Left cardiac atrium (tissue), 4 donors: ENCODE measurements at regions of chr3 and their contacts with region 1.

Region 1: DNA sequence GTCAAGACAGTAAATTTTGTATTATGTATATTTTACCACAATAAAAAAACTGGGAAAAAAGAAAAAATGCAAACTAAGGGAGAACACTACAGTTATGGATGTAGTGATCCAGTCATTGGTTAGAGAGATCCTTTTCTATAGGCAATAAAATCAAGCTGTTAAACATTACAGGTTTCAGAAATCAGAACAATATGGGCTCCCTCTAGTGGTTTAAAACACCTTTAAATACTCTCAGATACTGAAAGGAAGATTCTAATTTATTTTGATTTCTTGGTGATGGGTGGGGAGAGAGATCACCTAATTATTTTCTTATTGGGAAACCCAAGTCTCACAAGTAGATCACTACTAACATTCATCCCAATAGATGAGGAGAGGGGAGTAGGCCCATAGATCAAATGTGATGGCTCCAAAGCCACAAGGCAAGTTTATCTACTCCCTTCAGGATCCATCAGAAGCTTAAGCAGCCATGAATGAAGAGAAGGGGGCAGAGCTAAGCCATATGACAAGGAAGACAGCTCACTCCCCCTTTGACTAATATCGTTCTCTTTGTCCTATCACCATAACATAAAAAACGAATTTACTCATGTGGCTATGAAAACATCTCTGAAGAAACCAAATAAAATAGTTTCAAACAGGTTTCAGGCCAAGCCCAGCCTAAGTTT is 118.6 kb downstream of the ANO10 start:
- DNase-seq: no peak
- ATAC-seq: peak in 1 of 2 donors; percentile 27

Region 2: DNA sequence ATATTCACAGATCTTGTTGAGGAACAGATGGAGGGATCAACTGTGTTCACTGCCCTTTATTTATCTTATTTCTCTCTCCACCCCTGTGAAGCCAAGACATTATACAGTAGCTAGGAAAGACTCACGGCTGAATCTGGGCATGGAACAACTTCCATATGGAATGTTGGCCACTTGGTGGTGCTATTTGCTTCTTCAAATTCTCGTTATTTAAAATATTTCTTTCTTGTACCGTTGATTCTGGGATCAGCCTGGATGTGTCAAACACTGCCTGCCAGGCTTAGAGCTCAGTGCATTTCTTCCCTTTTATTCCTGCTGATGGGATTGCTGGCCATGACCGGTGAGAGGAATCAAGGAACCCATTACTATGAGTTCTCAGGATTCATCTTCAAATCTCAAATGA is 541.6 kb before region 1 on chr3:
- intact Hi-C with region 1: loop called in 1 of 2 experiments (anchors 5 kb)
- DNase-seq: peak; percentile 28
- ATAC-seq: peak; percentile 57 to 74

Region 3: DNA sequence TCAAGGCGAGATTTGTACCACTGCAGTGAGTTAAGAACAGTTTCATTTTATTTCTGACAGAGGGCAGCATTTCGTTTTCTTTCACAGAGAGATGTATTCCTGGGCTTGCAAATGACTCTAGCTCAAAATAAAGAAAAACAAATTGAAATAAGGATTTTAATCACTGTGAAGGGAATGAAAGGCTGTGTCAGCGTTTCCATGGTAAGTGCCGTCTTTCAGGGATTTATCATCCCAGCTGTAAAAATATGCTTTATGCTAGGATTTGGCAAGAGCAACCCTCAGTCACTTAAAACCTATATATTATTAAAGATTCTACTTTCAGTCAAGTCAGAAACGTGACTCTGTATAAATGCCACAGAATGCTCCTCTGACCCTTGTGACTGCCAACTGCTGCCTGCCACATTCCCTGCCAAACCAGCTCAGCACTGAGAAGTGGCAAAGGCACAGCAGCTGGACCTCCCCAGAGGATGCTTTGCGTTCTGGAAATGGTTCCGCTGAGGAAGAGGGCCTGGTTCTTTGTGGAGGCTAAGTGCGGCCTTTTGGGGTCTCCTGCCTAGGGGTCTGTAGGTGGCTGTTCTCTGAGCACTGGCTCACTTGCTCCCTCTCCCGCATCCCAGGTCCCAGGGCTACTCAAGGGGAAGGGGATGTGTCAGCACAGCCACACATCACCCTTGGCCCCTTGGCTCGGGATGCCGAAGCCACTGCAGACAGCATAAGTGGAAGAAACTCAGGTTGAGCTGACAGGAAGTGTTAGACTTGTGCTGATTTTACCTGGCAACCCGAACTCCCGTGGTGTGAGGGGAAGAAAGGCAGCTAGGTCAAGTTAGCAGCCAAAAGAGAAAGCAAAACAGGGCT is 340.7 kb before region 1 on chr3:
- intact Hi-C with region 1: loop called (anchors 1 to 5 kb)
- DNase-seq: no peak
- ATAC-seq: peak; percentile 76 to 79

Region 4: GRCh38 chr3:43223670-43224364 is 279.4 kb before region 1 on chr3:
- intact Hi-C with region 1: loop called in 1 of 2 experiments (anchors 5 kb)
- DNase-seq: no peak
- ATAC-seq: no peak

Region 5: DNA sequence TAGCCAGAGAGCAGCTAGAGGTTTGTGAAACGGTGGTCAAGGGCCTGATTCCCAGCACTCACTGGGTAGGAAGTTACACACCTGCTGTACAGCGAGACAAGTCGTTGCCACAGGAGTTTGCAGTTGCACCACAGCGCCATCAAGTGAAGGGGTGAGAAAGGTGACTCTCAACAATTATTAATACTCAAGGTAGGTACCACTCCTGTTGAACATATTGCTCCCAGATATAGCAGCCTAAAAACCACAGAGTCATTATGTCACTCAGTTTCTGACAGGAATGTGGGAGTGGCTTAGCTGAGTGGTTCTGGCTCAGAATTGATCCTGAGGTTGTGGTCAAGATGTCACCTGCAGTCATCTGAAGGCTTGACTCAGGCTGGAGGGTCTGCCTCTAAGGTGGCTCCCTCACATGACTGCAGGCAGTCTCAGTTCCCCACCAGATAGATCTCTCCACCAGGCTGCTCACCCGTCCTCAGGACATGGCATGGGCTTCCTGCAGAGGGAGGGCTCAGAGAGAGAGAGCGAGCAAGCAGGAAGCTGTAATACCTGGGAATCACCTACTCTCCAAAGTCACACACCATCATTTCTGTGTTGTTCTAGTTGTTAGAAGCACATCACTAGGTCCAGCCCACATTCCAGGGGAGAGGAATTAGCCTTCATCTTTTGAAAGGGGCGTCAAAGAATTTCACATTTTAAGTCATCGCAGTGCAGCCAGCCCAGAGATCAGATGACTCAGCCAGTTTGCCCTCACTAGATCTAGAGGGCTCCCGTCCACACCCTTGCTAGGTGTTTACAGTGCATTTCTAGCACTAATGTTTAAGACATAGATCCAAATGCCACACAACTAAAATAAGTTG is 135.6 kb after region 1 on chr3:
- intact Hi-C with region 1: no loop called
- DNase-seq: no peak
- ATAC-seq: no peak